Endothelial cell of umbilical vein (primary cell): ENCODE measurements at regions of chr12 and their contacts with region 1.

Region 1: GRCh38 chr12:21773263-21773741 is 1.2 kb downstream of the KCNJ8 start:
- DNase-seq: no peak
- H3K4me3 ChIP-seq: no peak overlapping the region
- H3K27ac ChIP-seq: no peak overlapping the region
- H3K4me1 ChIP-seq: no peaks in the 10 kb centered on the region
- H3K27me3 ChIP-seq: peaks cover 28 to 36% of the 10 kb centered on the region in 2 experiments
- CTCF ChIP-seq: no peak
- POLR2A ChIP-seq: no peak

Region 2: GRCh38 chr12:21642707-21643389 is 130.5 kb before region 1 on chr12:
- CTCF ChIA-PET with region 1: no interaction called
- POLR2A ChIA-PET with region 1: no interaction called
- dilution Hi-C with region 1: no loop called
- intact Hi-C with region 1: no loop called
- DNase-seq: no peak
- H3K4me3 ChIP-seq: no peak overlapping the region
- H3K27ac ChIP-seq: no peak overlapping the region
- H3K4me1 ChIP-seq: peaks cover 2% of the 10 kb centered on the region
- H3K27me3 ChIP-seq: no peaks in the 10 kb centered on the region
- CTCF ChIP-seq: no peak
- POLR2A ChIP-seq: no peak

Region 3: DNA sequence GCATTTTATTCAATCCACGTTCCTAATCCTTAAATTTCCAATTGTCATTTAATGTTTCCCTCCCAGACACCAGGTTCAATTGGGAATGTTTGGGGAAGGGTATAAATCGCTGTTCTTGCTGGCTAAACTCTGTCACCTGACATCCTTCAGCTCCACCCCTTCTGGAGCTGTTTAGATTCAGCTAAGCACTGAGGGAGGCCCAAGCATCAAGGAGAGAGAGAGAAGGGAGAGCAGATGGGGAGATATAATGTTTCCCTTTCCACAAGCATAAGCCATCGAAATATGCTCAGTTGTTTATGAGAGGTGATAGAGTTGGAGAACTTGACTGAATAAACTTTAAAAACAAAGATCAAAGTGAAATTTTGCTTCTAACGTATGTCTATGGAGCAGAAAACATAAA is 166.1 kb after region 1 on chr12:
- CTCF ChIA-PET with region 1: no interaction called
- POLR2A ChIA-PET with region 1: no interaction called
- dilution Hi-C with region 1: no loop called
- intact Hi-C with region 1: loop called (anchors 5 kb)
- DNase-seq: no peak
- H3K4me3 ChIP-seq: no peak overlapping the region
- H3K27ac ChIP-seq: no peak overlapping the region
- H3K4me1 ChIP-seq: peaks cover 12% of the 10 kb centered on the region
- H3K27me3 ChIP-seq: peaks cover 33 to 47% of the 10 kb centered on the region in 2 experiments
- CTCF ChIP-seq: no peak
- POLR2A ChIP-seq: no peak